BJ (cell line): ENCODE measurements at regions of chr1 and their contacts with region 1.

Region 1: DNA sequence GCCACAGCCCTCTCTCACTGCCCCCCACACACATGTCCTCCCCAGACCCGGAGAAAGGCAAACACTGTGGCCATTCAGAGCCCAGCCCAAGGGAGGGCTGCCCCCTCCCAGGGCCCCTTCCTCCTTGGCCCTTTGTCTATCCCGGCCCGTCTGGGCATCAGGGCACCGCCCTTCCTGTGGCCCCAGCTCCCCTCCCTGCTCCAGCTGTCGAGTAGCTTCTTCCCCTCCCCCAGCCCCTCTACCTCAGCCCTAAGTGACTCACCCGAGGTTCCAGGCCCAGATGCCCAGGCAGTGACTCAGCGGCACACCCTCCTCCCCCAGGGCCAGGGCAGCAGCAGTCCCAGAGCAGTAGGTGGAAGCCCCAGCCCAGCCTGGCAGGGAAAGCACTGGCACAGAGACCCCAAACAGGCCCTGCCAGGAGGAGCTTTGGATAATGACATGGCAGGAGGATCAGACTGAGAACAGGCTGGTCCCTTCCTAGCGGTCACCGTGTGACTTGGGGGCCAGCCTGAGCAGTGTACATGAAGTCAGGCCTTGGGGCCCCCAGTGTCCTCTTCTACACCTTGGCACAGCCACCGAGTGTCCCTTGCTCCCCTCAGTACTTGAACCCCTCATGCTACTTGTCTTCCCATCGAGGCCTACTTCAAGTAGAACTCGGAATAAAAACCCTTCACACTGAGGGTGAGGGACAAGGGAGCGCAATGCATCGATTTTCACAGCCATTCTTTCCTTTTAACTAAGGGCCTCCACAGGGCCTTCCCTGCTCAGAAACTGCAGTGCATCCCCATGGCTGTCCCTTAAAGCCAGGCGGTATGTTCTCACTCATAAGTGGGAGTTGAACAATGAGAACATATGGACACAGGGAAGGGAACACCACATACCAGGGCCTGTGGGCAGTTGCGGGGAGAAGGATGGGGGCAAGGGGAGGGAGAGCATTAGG is 1.1 kb upstream of the S100A2 start:
- DNase-seq: peak; percentile 89
- H3K4me3 ChIP-seq: no peak overlapping the region
- H3K27me3 ChIP-seq: no peaks in the 10 kb centered on the region
- CTCF ChIP-seq: no peak

Region 2: GRCh38 chr1:153553830-153554541 is 12.7 kb before region 1 on chr1:
- CTCF ChIA-PET with region 1: interaction called, 14 read pairs
- POLR2A ChIA-PET with region 1: interaction called, 5 read pairs
- DNase-seq: no peak
- H3K4me3 ChIP-seq: no peak overlapping the region
- H3K27me3 ChIP-seq: no peaks in the 10 kb centered on the region
- CTCF ChIP-seq: no peak